ENCODE measurements at regions of chr22 and their contacts with region 1.

Region 1: GRCh38 chr22:39319270-39320022 is at the start of gene RPL3:
- DNase-seq: peak; percentile 91
- H3K4me3 ChIP-seq: peak within 1 kb of the TSS; percentile 89
- CTCF ChIP-seq: no peak

Region 2: GRCh38 chr22:39148747-39149561 is 170.5 kb before region 1 on chr22:
- CTCF ChIA-PET with region 1: interaction called, 8 read pairs
- POLR2A ChIA-PET with region 1: interaction called, 12 read pairs
- DNase-seq: no peak
- H3K4me3 ChIP-seq: no peak overlapping the region
- CTCF ChIP-seq: no peak

Region 3: DNA sequence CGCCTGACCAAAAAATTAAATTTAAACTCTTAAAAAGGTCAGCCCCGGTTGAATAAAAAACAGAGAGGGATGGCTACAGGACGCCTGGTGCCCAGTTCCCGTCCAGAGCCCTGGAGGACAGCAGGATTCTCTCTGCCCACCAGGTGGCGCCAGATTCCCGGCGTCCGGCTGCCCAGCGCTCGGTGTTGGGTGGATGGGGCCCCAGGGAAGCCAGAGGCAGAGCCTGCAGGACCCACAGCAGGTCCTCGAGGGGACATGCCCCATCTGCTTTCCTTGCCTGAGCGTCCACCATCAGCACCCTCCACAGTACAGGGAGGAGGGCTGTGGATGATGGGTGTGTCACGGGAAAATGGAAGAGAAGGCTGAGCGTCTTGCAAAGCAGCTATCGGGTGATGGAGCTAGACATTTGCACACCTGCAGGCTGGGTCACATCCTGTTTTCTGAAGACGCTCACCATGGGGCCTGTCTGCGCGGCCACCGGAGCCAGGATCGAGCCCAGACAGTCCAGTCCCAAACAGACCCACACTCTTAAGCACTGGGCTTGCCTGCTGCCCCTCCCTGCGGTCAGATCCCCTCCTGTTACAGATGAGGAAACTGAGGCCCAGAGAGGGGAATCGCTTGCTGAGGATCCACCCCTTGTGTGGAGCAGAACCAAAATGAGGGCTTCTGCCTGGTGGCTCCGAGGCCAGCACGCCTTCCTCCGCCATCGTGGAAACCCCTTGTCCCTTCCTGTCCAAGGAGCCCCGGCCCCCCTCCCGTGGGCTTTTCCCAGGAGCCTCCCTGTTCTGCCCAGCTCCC is 148.4 kb before region 1 on chr22:
- CTCF ChIA-PET with region 1: interaction called, 258 read pairs
- POLR2A ChIA-PET with region 1: interaction called, 28 read pairs
- DNase-seq: no peak
- H3K4me3 ChIP-seq: no peak overlapping the region
- CTCF ChIP-seq: peak; percentile 95

Region 4: GRCh38 chr22:39332441-39333064 is 13.1 kb after region 1 on chr22:
- CTCF ChIA-PET with region 1: interaction called, 18 read pairs
- POLR2A ChIA-PET with region 1: interaction called, 87 read pairs
- DNase-seq: no peak
- H3K4me3 ChIP-seq: no peak overlapping the region
- CTCF ChIP-seq: no peak

Region 5: DNA sequence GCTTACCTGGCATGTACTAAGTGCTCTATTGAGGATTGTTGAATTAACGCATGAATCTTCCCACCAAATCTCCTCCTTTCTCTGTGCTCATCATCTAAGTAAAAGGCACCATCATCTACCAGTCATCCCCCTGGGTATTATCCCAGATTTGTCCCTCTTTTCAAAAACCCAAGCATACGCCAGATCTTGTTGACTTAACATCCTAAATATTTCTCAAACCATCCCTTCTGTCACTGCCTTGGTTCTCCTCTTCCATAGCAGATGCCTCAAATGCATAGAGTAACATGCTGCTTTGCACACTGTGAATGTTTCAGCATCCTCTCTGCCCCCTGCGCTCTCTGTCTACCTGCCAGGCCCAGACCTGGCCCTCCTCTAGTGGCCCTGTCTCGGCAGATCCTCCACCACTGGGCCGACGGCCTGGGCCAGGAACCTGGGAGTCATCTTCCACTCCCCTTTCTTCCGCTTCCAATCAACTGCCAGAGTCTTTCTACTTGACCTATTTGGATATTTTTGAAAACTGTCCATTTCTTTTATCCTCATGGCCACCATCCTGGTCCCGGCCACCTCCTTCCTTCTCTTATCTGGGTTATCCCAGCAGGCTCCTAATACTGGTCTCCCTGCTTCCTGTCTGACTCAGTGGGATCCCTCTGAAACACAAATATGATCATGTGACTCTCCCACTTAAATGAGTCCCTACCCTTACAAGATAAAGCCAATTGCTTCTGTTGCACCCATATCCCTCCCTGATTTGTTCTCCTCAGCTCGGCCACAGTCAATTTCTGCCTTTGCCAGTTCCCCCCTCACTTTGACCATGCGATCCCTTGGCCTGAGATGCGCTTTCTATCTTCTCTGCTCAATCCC is 76.7 kb after region 1 on chr22:
- CTCF ChIA-PET with region 1: interaction called, 12 read pairs
- POLR2A ChIA-PET with region 1: interaction called, 14 read pairs
- DNase-seq: no peak
- H3K4me3 ChIP-seq: no peak overlapping the region
- CTCF ChIP-seq: no peak

Region 6: DNA sequence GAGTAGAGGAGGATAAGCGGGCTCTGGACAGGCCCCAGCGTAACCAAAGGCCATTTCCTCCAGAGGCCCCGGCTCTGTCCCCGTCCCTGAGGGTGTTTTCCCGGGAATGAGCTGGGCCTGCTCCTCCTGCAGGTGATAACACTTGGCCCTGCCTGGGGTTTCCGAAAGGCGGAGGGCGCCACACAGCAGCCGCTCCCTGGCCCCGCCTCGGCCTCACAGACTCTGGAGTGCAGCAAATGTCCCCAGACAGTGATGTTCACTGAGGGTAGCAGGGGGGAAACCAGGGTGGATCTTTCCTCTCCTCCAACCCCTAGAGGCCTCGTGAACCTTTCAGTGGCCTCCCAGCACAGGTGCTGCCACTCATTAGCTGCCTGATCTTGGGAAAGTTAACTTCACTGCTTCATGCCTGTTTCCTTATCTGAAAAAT is 126.9 kb after region 1 on chr22:
- CTCF ChIA-PET with region 1: no interaction called
- POLR2A ChIA-PET with region 1: no interaction called
- DNase-seq: no peak
- H3K4me3 ChIP-seq: no peak overlapping the region
- CTCF ChIP-seq: no peak

Measured in AG04449 (cell line).